ENCODE measurements at regions of chr20 and their contacts with region 1.

Region 1: DNA sequence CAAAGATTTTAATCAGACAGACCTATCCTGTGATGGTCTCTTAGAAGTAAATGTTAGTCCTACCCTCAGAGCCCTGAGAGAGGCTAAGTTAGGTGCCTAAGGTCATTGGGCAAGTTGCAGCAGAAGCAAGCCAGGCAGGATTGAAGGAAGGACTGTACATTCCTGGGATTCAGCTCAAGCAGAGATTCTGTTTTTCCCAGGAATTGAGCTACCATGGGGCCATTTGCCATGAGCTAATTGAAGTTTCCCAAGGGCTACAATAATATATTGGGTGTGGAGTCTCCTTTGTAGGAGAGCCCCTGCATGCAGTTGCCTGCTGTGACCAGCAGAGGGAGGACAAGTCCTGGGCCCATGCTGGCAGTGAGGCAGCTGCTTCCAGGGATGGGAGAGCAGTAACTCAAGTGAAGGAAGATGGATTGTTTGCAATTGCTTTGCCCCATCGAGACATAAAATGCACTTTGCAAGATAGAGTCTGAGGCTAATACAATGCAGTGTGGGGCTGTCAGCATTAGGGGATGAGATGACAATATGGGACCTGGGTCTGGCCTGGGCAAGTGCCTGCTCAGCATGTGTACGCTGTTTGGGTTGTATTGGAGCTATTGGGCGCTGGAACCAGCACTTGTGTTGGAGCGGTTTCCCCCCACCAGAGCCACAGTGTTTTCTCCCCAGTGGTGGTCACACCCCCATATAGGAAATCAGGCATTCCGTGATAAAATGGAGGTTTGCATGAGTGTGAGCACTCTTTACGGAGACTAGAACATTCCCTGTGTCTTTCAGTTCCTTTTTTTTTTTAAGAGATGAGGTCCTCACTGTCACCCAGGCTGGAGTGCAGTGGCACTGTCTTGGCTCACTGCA is 27.9 kb downstream of the DNMT3B start:
- DNase-seq: peak; percentile 97
- H3K27ac ChIP-seq: no peak overlapping the region
- CTCF ChIP-seq: peak; percentile 100

Region 2: DNA sequence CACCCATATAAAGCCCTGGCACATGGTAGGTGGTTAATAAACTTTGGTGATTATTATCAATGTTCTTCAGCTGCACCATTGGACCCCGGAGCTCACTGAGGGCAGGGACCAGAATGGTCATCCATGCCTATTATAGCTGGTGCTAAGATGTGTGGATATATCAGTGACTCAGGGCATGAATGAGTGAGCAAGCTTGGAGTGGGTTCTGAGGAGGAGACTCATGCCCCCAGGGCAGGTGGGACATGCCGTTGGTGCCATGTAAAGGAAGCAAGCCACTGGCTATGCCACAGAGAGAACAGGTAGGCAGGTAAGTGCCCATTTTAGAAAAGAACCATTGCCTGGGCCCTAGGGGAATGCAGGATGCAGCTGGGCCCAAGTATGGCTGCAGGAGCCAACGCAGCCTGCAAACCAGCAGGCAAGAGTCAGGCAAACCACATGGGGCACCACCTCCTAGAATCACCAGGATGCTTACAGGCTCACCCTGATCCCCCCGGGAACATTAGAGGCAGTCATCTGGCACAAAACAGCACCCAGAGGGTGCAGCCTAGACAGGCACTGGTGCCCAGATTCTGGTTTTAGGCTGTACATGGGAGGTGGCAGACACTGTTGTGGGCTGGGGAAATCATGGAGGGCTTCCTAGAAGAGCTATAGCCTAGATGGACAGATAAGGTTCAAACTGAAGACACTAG is 606.0 kb before region 1 on chr20:
- CTCF ChIA-PET with region 1: no interaction called
- POLR2A ChIA-PET with region 1: no interaction called
- DNase-seq: no peak
- H3K27ac ChIP-seq: no peak overlapping the region
- CTCF ChIP-seq: no peak

Region 3: GRCh38 chr20:32762149-32762753 is 27.9 kb before region 1 on chr20 and contains the start of gene DNMT3B:
- CTCF ChIA-PET with region 1: interaction called, 10 read pairs
- POLR2A ChIA-PET with region 1: no interaction called
- DNase-seq: peak; percentile 85
- H3K27ac ChIP-seq: peak within 1 kb of the TSS; percentile 38
- CTCF ChIP-seq: no peak; the same call in 1 of the 2 replicates

Region 4: GRCh38 chr20:32819992-32820710 is 30.0 kb after region 1 on chr20:
- CTCF ChIA-PET with region 1: interaction called, 18 read pairs
- POLR2A ChIA-PET with region 1: no interaction called
- DNase-seq: peak; percentile 64
- H3K27ac ChIP-seq: peak overlapping the region; percentile 85
- CTCF ChIP-seq: no peak

Region 5: DNA sequence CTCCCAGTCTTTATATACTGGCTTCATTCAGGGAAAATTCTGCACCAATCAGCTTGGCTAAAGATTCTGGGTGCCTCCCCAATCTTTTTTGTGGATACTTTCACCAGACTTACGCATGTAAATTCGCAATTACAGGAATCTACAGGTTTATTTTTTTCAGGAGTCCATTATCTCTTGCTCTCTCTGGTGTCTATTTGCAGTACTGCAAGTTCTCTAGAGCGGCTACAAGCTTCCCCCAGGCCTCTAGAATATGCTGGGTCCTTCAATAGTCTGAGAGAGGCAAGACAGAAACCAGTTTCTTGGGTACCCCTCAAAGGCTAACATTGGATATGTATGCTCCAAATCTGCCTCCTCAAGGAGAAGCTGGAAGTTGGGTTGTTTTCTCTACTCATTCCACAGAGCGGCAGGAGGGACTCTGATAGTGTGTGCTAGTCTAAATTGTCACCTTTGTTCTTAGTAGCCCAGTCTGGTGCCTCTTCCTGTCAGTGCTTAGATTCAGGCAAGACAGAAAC is 155.6 kb after region 1 on chr20:
- CTCF ChIA-PET with region 1: interaction called, 21 read pairs
- POLR2A ChIA-PET with region 1: no interaction called
- DNase-seq: peak; percentile 63
- H3K27ac ChIP-seq: no peak overlapping the region
- CTCF ChIP-seq: peak; percentile 63

Measured in RWPE1 (cell line).